ENCODE measurements at regions of chr15 and their contacts with region 1.

Region 1: DNA sequence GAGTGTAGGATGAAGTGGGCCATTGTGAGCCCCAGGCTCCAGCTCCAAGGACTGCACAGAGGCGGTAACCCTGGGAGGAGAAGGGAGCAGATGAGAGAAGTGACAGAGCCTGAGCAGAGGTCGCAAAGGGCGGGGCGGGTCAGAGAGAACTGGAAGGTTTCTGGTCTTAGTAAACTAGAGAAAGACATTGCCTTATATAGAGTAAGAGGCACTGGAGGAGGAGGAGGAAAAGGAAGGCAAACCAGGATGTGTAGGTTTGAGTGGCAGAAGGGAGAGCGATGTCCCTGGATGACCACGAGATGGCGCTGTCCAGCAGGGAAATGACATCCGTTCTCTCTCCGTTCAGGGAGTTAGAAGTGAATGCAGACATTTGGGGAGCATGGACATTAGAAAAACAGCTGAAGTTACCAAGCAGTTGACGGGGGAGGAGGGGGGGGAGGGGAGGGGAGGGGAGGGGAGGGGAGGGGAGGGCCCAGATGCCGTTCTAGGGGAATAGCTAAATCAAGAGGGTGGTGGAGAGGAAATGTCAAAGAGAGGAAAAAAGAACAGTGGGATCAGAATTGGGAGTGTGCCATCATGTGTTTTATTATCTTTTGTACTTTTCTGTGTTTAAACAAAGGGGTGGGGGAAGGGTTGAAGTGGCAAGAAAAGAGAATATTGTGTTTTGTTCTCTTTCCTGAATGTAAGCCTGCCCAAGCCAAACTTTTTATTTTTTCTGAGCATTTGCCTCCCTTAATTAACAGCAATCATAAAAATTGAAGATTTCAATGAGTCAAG is 48.8 kb downstream of the STARD5 start:
- DNase-seq: peak; percentile 87
- H3K4me3 Mint-ChIP-seq: no peak overlapping the region
- H3K27ac Mint-ChIP-seq: no peak overlapping the region
- H3K4me1 Mint-ChIP-seq: peaks cover 15% of the 10 kb centered on the region
- H3K27me3 Mint-ChIP-seq: no peaks in the 10 kb centered on the region
- CTCF ChIP-seq: peak; percentile 83

Region 2: GRCh38 chr15:81256916-81257315 is 18.2 kb before region 1 on chr15:
- CTCF ChIA-PET with region 1: interaction called, 10 read pairs
- POLR2A ChIA-PET with region 1: no interaction called
- intact Hi-C with region 1: no loop called
- DNase-seq: peak; percentile 45
- H3K4me3 Mint-ChIP-seq: no peak overlapping the region
- H3K27ac Mint-ChIP-seq: no peak overlapping the region
- H3K4me1 Mint-ChIP-seq: peaks cover 18% of the 10 kb centered on the region
- H3K27me3 Mint-ChIP-seq: no peaks in the 10 kb centered on the region
- CTCF ChIP-seq: peak; percentile 54

Region 3: DNA sequence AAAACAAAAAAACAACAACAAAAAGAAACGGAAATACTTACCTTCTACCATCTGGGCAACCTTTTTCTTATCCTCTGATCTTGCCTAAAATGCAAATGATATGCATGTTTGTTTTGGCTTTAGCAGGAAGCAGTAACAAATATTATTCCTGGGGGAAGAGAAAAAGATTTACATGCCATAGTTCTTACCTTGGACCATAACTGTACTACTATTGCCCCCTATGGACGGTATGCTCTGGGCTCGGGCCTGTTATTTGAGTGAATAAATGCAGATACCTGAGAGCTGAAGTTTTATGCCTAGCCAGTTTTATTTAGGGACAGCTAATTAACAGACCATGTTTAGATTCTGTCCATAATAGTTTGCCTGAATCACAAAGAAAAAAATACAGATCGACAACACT is 61.4 kb after region 1 on chr15:
- CTCF ChIA-PET with region 1: interaction called, 12 read pairs
- POLR2A ChIA-PET with region 1: no interaction called
- intact Hi-C with region 1: loop called (anchors 1 kb)
- DNase-seq: peak; percentile 57
- H3K4me3 Mint-ChIP-seq: no peak overlapping the region
- H3K27ac Mint-ChIP-seq: no peak overlapping the region
- H3K4me1 Mint-ChIP-seq: peaks cover 24% of the 10 kb centered on the region
- H3K27me3 Mint-ChIP-seq: no peaks in the 10 kb centered on the region
- CTCF ChIP-seq: peak; percentile 14

Region 4: GRCh38 chr15:81394603-81395002 is 119.5 kb after region 1 on chr15:
- CTCF ChIA-PET with region 1: interaction called, 318 read pairs
- POLR2A ChIA-PET with region 1: interaction called, 15 read pairs
- intact Hi-C with region 1: no loop called
- DNase-seq: peak; percentile 38
- H3K4me3 Mint-ChIP-seq: no peak overlapping the region
- H3K27ac Mint-ChIP-seq: no peak overlapping the region
- H3K4me1 Mint-ChIP-seq: peaks cover 15% of the 10 kb centered on the region
- H3K27me3 Mint-ChIP-seq: no peaks in the 10 kb centered on the region
- CTCF ChIP-seq: no peak

Region 5: DNA sequence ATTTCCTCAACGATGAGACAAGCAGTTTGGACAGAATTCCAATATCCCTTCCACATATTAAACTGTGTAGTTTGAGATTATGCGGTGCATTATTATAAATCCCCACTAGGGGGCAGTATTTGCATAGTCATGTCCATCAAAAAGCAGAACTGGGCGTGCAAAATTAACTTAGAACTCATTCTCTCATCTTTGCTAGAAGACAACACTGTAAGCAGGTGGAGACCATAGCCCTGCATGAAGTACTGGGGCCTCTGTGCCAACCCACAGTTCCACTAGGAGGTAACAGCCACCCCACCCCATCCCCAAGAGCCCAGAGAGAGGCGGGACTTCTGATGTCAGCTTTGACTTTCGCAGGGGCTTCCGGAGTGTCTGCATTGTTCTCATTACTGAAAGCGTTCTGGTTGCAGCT is 205.5 kb after region 1 on chr15:
- CTCF ChIA-PET with region 1: no interaction called
- POLR2A ChIA-PET with region 1: no interaction called
- intact Hi-C with region 1: no loop called
- DNase-seq: peak; percentile 62
- H3K4me3 Mint-ChIP-seq: no peak overlapping the region
- H3K27ac Mint-ChIP-seq: no peak overlapping the region
- H3K4me1 Mint-ChIP-seq: no peaks in the 10 kb centered on the region
- H3K27me3 Mint-ChIP-seq: no peaks in the 10 kb centered on the region
- CTCF ChIP-seq: peak; percentile 79

Region 6: DNA sequence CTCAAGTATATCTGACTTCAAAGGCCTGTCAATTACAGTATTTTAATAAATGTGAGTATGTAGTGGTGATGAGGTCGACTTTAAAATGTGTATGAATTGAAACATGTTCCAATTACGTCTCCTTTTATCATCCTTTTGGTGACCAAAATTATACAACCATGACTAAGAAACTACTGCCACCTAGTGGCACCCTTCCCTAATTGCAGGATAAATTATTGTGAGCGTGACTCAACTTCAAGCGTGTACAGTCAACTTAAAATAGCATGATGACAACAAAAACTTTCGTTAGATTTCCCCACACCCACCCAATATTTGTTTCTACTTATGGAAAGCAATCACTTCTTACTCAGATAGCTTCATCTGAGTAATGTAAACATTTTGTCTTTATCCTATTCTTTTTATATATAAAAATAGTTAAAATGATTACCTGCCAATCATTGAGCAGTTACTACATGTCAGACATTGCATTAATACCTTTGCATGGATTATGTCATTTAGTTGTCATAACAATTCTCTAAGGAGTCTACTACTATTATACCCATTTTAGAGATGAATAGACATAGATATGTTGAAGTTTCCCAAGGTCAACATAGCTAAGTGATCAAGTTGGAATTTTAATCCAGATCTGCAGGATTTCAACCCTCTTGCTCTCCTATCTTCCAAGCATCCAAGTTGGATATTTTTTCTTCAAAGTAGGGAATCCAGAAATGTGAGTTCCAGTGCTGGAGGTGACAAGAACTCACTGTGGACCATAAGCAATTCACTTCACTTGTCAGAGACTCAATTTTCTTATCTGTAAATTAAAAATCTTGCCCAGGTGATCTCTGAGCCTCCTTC is 664.7 kb after region 1 on chr15:
- CTCF ChIA-PET with region 1: no interaction called
- POLR2A ChIA-PET with region 1: no interaction called
- intact Hi-C with region 1: loop called (anchors 10 kb)
- DNase-seq: peak; percentile 69
- H3K4me3 Mint-ChIP-seq: no peak overlapping the region
- H3K27ac Mint-ChIP-seq: no peak overlapping the region
- H3K4me1 Mint-ChIP-seq: peaks cover 10% of the 10 kb centered on the region
- H3K27me3 Mint-ChIP-seq: no peaks in the 10 kb centered on the region
- CTCF ChIP-seq: peak; percentile 79